ENCODE measurements at regions of chr22 and their contacts with region 1.

Region 1: GRCh38 chr22:44625981-44626687 is 75.9 kb upstream of the PRR5 start:
- DNase-seq: peak in 1 of 2 experiments; percentile 74
- H3K4me3 ChIP-seq: no peak overlapping the region
- H3K27ac ChIP-seq: no peak overlapping the region
- H3K4me1 ChIP-seq: no peaks in the 10 kb centered on the region
- H3K27me3 ChIP-seq: peaks cover 35% of the 10 kb centered on the region
- CTCF ChIP-seq: peak; percentile 99

Region 2: DNA sequence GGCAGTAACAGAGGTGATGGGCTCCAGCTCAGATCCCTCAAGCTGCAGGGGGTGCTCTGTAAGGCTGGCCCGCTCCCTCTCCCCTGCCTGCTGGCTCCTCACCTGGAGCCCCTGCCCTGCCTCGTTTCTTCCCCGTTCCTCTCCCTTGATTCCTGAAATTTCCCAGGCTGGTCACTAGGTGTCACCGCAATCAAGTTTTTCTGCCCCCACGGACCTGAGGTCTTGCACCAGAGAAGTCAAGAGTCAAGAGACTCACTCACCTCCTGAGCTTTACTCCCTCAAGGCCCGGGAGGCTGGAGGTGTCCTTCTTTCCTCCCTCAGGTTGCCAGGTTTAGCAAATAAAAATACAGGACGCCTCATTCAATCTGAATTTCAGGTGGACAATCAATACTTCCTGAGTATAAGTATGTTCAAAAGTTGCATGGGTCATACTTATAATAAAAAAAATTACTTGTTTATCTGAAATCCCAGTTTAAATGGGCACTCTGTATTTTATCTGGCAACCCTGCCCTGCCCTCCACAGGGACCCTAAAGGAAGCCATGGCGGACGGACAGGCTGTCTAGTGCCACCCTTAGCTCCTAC is 1352.1 kb before region 1 on chr22:
- CTCF ChIA-PET with region 1: no interaction called
- POLR2A ChIA-PET with region 1: no interaction called
- intact Hi-C with region 1: loop called (anchors 10 kb)
- DNase-seq: peak; percentile 43 to 55
- H3K4me3 ChIP-seq: no peak overlapping the region
- H3K27ac ChIP-seq: no peak overlapping the region
- H3K4me1 ChIP-seq: peaks cover 15% of the 10 kb centered on the region
- H3K27me3 ChIP-seq: peaks cover 25% of the 10 kb centered on the region
- CTCF ChIP-seq: peak; percentile 92

Region 3: DNA sequence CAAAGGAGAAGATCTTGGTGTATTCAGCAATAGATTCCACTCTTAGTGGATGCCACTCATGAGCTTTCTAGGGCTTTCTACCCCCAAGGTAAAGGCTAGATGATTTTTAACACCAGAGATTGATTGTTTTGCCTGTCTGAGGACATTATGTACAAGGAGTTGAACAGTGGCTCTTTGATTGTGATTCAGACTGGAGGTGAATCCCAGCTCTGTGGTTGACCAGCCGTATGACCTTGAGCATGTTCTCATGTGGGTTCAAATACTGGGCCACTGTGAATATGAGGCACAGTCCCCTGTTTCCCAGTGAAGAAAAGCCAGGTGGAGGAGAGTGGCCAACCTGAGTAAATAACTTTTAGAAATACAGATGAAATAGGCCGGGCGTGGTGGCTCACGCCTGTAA is 626.0 kb before region 1 on chr22:
- CTCF ChIA-PET with region 1: interaction called, 12 read pairs
- POLR2A ChIA-PET with region 1: no interaction called
- intact Hi-C with region 1: no loop called
- DNase-seq: peak in 1 of 2 experiments; percentile 24
- H3K4me3 ChIP-seq: no peak overlapping the region
- H3K27ac ChIP-seq: no peak overlapping the region
- H3K4me1 ChIP-seq: no peaks in the 10 kb centered on the region
- H3K27me3 ChIP-seq: no peaks in the 10 kb centered on the region
- CTCF ChIP-seq: no peak

Region 4: GRCh38 chr22:44192098-44192810 is 433.9 kb before region 1 on chr22:
- CTCF ChIA-PET with region 1: no interaction called
- POLR2A ChIA-PET with region 1: no interaction called
- intact Hi-C with region 1: loop called (anchors 10 kb)
- DNase-seq: peak; percentile 46 to 64
- H3K4me3 ChIP-seq: no peak overlapping the region
- H3K27ac ChIP-seq: no peak overlapping the region
- H3K4me1 ChIP-seq: peaks cover 26% of the 10 kb centered on the region
- H3K27me3 ChIP-seq: peaks cover 48% of the 10 kb centered on the region
- CTCF ChIP-seq: no peak

Region 5: DNA sequence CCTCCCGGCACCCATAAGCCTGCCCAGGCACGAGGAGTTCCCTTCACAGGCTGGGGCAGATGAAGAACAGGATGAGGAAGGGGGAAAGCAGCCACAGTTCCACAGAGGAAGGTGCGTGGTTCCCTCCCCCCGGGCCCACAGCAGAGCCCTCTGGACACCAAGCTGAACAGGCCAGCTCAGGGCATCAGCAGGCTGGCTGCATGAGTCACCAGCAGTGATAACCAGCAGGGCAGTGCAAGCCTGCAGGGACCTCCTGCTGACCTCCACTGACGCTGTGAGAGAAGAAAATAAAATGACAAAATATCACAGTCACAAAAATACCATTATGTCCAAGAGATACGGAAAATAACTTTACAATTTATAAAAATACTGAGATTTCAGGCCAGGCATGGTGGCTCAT is 139.6 kb before region 1 on chr22:
- CTCF ChIA-PET with region 1: interaction called, 20 read pairs
- POLR2A ChIA-PET with region 1: no interaction called
- intact Hi-C with region 1: no loop called
- DNase-seq: peak; percentile 57 to 77
- H3K4me3 ChIP-seq: no peak overlapping the region
- H3K27ac ChIP-seq: no peak overlapping the region
- H3K4me1 ChIP-seq: peaks cover 39% of the 10 kb centered on the region
- H3K27me3 ChIP-seq: no peaks in the 10 kb centered on the region
- CTCF ChIP-seq: no peak

Region 6: DNA sequence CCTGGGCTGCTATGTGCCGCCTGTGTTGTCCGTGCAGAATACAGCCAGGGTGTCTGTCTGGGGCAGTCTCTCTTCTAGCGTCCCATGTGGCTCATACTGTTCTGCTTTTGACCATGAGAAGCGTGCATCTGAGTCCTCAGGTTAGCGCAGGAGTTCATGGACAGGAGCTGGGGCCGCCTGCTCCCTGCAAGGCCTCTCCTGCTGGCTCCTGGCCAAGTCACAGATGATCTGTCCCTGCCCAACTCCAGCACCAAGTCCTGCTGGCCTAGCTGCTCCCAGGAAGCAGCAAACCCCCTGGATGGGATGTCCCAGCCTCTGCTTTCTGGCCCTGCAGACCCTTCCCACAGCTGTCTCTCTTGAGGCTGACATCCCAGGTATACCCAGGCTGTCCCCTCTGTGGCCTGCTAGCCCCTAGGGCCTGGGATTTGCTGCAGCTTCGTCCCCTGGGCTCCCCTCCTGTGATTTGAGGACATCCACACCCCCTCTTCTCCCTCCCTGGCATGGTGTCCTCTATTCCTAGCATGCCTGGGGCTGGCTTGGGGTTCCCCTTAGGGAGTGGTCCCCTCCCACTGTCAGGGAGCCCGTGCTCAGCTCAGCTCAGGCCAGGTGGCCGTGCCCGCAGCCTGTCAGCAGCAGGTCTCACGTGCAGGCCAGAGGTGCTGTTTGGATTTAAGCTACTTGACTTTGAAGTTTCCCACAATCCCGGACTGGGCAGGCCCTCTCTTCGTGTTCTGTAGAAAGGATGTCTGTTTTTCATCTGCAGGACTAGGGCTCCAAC is 93.6 kb after region 1 on chr22:
- CTCF ChIA-PET with region 1: no interaction called
- POLR2A ChIA-PET with region 1: no interaction called
- intact Hi-C with region 1: no loop called
- DNase-seq: no peak
- H3K4me3 ChIP-seq: no peak overlapping the region
- H3K27ac ChIP-seq: no peak overlapping the region
- H3K4me1 ChIP-seq: no peaks in the 10 kb centered on the region
- H3K27me3 ChIP-seq: no peaks in the 10 kb centered on the region
- CTCF ChIP-seq: no peak

Measured in PC-9 (cell line).